GM12878 (cell line): ENCODE measurements at regions of chr19 and their contacts with region 1.

Region 1: DNA sequence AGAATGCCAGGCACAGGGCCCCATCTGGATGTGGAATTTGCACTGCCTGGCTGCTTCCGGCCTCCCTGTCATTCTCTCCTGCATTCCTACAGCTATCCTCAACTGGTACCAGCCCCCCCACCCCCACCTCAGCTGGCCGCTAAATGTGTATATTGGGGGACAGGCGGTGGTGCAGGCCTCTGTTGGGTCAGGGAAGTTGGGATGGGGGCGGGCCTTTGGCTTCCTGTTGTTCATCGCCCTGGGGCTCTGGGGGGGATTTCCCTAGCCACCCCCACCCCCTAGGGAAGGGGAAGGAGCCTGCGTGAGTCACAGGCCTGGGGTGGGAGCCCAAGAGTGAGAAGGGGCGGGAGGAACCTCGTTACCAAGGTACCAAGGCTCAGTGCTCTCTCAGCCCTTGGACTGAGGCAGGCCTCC is 10.6 kb downstream of the POU2F2 start:
- DNase-seq: peak; percentile 52
- ATAC-seq: peak; percentile 75
- H3K4me3 ChIP-seq: peak overlapping the region; percentile 57
- H3K27ac ChIP-seq: peak overlapping the region; percentile 96
- H3K4me1 ChIP-seq: peaks cover 52% of the 10 kb centered on the region
- H3K27me3 ChIP-seq: no peaks in the 10 kb centered on the region
- CTCF ChIP-seq: no peak
- EP300 ChIP-seq: no peak
- POLR2A ChIP-seq: 0 out of 2 replicates have a peak, but pooled peaks have one; percentile 43
- RAD21 ChIP-seq: no peak

Region 2: DNA sequence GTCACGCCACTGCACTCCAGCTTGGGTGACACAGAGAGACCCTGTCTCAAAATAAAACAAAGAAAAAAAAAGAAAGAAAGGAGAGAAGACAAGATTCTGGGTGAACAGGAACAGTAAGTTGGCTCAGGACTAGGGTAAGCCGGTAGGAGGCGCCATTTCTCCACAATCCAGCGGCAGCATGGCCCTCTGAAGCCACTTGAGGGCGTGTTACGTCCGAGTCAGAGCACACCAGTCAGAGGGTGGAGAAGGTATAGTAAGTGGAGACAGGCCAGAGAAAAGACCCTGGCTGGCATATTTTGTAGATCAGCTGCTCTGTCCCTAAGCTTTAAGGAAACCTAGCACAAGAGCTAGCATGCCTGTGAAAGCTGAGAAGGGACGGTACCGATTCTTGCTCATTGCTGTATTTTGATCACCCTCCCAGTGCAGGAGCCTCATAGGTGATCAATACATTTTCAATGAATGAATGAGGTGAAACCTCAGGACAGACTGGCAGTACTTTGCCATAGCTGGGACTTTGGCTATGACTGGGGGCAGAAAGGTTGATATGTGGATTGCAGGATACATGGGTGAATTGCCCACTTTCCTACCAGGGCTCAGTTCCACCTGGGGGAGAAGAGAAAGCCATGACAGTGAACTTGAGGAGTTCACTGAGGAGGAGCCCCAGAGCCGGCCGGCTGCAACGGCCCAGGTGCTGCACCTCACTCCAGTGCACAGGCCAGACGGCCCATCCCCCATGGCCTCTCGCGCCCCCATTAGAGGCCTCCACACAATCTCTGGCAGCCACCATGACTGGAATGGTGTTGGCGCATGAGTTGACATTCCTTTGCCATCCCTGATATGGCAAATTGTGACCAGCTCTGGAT is 12.9 kb before region 1 on chr19:
- CTCF ChIA-PET with region 1: interaction called, 132 read pairs
- POLR2A ChIA-PET with region 1: interaction called, 75 read pairs
- RAD21 ChIA-PET with region 1: interaction called, 92 read pairs
- SMC1A ChIA-PET with region 1: interaction called, 223 read pairs
- in situ Hi-C with region 1: no loop called
- intact Hi-C with region 1: no loop called
- DNase-seq: peak; percentile 72
- ATAC-seq: peak; percentile 99
- H3K4me3 ChIP-seq: no peak overlapping the region
- H3K27ac ChIP-seq: no peak overlapping the region
- H3K4me1 ChIP-seq: peaks cover 31% of the 10 kb centered on the region
- H3K27me3 ChIP-seq: no peaks in the 10 kb centered on the region
- CTCF ChIP-seq: peak; percentile 100; a peak in 5 of 6 replicates
- EP300 ChIP-seq: no peak; a peak in 1 of 4 replicates
- POLR2A ChIP-seq: no peak
- RAD21 ChIP-seq: peak; percentile 100

Region 3: DNA sequence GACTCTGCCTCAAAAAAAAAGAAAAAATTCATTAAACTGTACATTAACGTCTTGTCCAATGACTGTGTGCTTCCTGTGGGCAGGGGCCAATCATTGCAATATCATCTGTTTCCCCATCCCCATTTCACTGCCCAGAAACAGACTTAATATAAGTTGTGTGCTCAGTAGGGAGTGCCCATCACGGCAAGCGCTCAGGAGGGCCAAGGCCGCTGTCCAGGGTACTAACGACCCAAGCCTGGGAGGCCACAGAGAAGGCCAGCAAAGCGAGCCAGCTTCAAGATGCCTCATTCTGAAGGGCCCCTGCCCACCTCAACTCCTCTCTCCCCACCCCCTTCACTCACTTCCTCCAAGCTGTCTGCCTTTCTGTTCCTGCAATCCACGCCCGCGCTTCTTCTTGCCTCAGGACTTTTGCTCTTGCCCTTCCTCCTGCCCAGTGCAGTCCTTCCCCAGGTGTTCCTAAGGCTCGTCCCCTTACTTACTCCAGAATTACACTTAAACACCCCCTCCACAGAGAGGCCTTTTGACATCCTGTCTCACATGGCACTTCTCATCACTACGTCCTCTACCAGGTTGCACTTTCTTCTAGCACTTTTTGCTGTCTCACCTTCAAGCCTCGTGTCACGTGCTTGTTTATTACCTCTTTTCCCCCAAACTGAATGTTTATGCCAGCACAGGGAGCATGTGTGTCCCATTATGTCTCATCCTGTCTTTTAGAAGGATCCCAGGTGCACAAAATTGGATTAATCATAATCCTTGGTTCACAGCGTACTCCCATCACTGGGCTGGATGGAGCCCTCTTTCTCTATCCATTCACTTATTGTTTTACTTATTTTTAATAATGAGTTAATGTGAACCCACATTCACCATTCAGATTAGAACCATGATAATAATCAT is 21.9 kb after region 1 on chr19:
- CTCF ChIA-PET with region 1: no interaction called
- POLR2A ChIA-PET with region 1: no interaction called
- RAD21 ChIA-PET with region 1: no interaction called
- SMC1A ChIA-PET with region 1: no interaction called
- in situ Hi-C with region 1: no loop called
- intact Hi-C with region 1: no loop called
- DNase-seq: no peak
- ATAC-seq: no peak
- H3K4me3 ChIP-seq: no peak overlapping the region
- H3K27ac ChIP-seq: no peak overlapping the region
- H3K4me1 ChIP-seq: no peaks in the 10 kb centered on the region
- H3K27me3 ChIP-seq: no peaks in the 10 kb centered on the region; a peak in 3 of 4 replicates
- CTCF ChIP-seq: no peak
- EP300 ChIP-seq: no peak
- POLR2A ChIP-seq: no peak
- RAD21 ChIP-seq: no peak

Region 4: DNA sequence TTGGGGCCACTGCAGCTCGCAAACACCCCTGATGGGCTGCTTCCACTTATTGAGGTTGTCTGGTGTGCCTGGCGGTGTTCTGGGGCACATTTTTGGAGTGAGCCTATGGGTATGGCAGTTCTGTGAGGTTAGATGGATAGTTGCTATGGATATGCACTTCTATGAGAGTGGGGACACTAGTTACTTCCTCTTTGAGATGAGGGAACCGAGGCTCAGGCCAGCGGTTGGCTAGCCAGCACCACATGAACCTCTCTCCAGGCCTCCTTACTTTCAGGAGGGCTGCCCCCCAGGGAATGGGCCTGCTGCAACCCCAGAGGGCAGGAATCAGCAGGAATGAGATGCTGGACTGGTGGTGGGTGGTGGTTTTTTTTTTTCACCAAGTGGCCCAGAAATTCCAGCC is 166.7 kb after region 1 on chr19:
- CTCF ChIA-PET with region 1: no interaction called
- POLR2A ChIA-PET with region 1: no interaction called
- RAD21 ChIA-PET with region 1: no interaction called
- SMC1A ChIA-PET with region 1: no interaction called
- in situ Hi-C with region 1: no loop called
- intact Hi-C with region 1: no loop called
- DNase-seq: no peak
- ATAC-seq: no peak
- H3K4me3 ChIP-seq: no peak overlapping the region
- H3K27ac ChIP-seq: no peak overlapping the region
- H3K4me1 ChIP-seq: peaks cover 16% of the 10 kb centered on the region
- H3K27me3 ChIP-seq: no peaks in the 10 kb centered on the region
- CTCF ChIP-seq: no peak
- EP300 ChIP-seq: no peak
- POLR2A ChIP-seq: no peak
- RAD21 ChIP-seq: no peak